B cell (primary cell): ENCODE measurements at regions of chr7 and their contacts with region 1.

Region 1: DNA sequence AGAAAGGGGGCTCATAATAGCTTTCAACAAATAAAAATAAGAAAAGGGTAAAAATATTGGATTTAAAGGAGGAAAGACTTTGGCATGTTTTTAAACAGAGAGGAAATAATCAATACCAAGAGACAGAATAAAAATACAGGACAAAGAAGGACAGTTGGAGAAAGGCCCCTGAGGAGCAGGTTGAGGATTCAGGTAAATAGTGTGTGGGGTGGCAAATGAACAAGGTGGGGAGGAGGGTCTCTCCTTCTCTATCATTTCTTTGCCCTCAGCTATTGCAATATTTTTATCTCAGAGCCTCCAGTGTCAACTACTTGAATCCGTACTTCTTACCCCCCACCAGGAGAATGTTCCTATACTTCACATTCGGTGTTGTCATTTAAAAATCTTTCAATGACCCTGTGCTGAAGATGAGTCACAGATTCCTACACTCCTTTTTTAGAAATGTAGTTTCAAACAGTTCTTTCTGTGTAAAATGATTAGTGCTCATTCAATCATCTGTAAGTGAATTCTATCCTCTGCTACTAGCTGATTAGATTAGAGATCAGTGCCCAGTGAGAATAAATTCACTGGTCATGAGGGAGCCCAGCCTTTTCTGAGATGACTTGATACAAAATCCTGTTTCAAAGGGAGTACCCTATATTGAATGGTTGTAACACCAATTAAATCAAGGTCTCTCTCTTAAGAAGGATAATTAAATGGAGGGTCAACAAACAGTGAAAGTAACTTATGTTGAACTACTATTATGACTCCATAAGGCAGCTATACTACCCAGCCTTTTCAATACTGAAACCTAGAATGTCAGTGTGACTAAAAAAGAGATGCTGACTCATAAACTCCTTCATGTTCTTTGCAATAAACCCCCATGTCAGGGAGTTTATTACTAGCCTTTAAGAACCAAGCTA is 50.4 kb upstream of the WNT16 start:
- DNase-seq: no peak
- ATAC-seq: peak; percentile 31
- H3K4me3 ChIP-seq: no peak overlapping the region
- H3K4me3 Mint-ChIP-seq: no peak overlapping the region
- H3K27ac ChIP-seq: no peak overlapping the region
- H3K27ac Mint-ChIP-seq: peak overlapping the region; percentile 57
- H3K4me1 ChIP-seq: peaks cover 5% of the 10 kb centered on the region in 2 donors
- H3K4me1 Mint-ChIP-seq: peaks cover 41% of the 10 kb centered on the region
- H3K27me3 ChIP-seq: no peaks in the 10 kb centered on the region
- H3K27me3 Mint-ChIP-seq: no peaks in the 10 kb centered on the region
- CTCF ChIP-seq: no peak

Region 2: GRCh38 chr7:120486164-120486563 is 792.2 kb before region 1 on chr7:
- CTCF ChIA-PET with region 1: no interaction called
- POLR2A ChIA-PET with region 1: no interaction called
- intact Hi-C with region 1: no loop called
- DNase-seq: no peak
- ATAC-seq: no peak
- H3K4me3 ChIP-seq: no peak overlapping the region
- H3K4me3 Mint-ChIP-seq: no peak overlapping the region
- H3K27ac ChIP-seq: no peak overlapping the region
- H3K27ac Mint-ChIP-seq: no peak overlapping the region
- H3K4me1 ChIP-seq: no peaks in the 10 kb centered on the region
- H3K4me1 Mint-ChIP-seq: no peaks in the 10 kb centered on the region
- H3K27me3 ChIP-seq: no peaks in the 10 kb centered on the region
- H3K27me3 Mint-ChIP-seq: no peaks in the 10 kb centered on the region
- CTCF ChIP-seq: no peak

Region 3: DNA sequence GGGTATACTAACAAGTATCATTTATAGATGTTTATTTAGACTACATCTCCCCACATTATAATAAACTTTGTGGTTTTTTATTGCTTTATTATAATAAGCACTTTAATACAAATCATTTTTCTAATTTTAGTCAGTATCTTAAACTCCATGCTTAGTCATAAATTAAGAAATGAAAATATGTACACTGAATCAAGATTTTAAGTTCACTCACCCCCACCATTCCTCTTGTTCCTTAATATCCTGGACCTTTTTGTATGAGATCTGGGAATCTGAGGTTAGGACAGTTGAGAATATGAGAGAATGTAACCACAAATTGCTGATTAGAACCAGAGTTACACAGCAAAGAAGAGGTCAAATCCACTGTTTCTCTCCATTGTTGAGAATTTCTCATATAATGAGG is 43.2 kb before region 1 on chr7:
- CTCF ChIA-PET with region 1: no interaction called
- POLR2A ChIA-PET with region 1: no interaction called
- intact Hi-C with region 1: loop called (anchors 5 kb)
- DNase-seq: no peak
- ATAC-seq: no peak
- H3K4me3 ChIP-seq: no peak overlapping the region
- H3K4me3 Mint-ChIP-seq: no peak overlapping the region
- H3K27ac ChIP-seq: no peak overlapping the region
- H3K27ac Mint-ChIP-seq: no peak overlapping the region
- H3K4me1 ChIP-seq: no peaks in the 10 kb centered on the region
- H3K4me1 Mint-ChIP-seq: peaks cover 6% of the 10 kb centered on the region
- H3K27me3 ChIP-seq: no peaks in the 10 kb centered on the region
- H3K27me3 Mint-ChIP-seq: no peaks in the 10 kb centered on the region
- CTCF ChIP-seq: no peak

Region 4: DNA sequence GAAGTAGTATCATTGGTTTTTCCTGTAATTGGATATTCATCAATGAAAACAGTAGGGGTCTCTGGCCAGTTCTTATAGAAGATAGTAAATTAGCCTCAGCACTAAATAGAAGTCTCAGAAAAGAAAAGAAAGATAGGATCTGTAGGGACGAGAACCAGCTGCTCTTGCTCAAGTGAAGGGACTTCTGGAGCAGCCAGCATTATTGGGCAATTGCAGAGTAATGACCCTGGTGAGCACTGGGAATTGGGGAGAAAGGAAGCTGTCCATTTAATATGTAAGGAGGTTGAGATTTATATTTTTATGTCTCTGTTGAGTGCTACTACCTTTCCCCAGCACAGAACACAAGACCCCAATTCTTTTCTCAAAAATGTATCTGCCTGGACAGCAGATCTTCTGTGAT is 10.8 kb before region 1 on chr7:
- CTCF ChIA-PET with region 1: no interaction called
- POLR2A ChIA-PET with region 1: no interaction called
- intact Hi-C with region 1: loop called (anchors 2 kb)
- DNase-seq: no peak
- ATAC-seq: no peak
- H3K4me3 ChIP-seq: no peak overlapping the region
- H3K4me3 Mint-ChIP-seq: no peak overlapping the region
- H3K27ac ChIP-seq: no peak overlapping the region
- H3K27ac Mint-ChIP-seq: no peak overlapping the region
- H3K4me1 ChIP-seq: no peaks in the 10 kb centered on the region
- H3K4me1 Mint-ChIP-seq: peaks cover 14% of the 10 kb centered on the region
- H3K27me3 ChIP-seq: no peaks in the 10 kb centered on the region
- H3K27me3 Mint-ChIP-seq: no peaks in the 10 kb centered on the region
- CTCF ChIP-seq: no peak

Region 5: GRCh38 chr7:121313793-121314676 is 35.7 kb after region 1 on chr7:
- CTCF ChIA-PET with region 1: no interaction called
- POLR2A ChIA-PET with region 1: no interaction called
- intact Hi-C with region 1: loop called (anchors 5 kb)
- DNase-seq: peak; percentile 54
- ATAC-seq: peak; percentile 88
- H3K4me3 ChIP-seq: peak overlapping the region in 3 of 5 experiments; percentile 17 to 28 (median 25)
- H3K4me3 Mint-ChIP-seq: peak overlapping the region; percentile 61
- H3K27ac ChIP-seq: peak overlapping the region; percentile 60 to 74
- H3K27ac Mint-ChIP-seq: peak overlapping the region; percentile 88
- H3K4me1 ChIP-seq: peaks cover 13 to 30% of the 10 kb centered on the region in 2 donors
- H3K4me1 Mint-ChIP-seq: peaks cover 44% of the 10 kb centered on the region
- H3K27me3 ChIP-seq: no peaks in the 10 kb centered on the region
- H3K27me3 Mint-ChIP-seq: no peaks in the 10 kb centered on the region
- CTCF ChIP-seq: no peak

Region 6: DNA sequence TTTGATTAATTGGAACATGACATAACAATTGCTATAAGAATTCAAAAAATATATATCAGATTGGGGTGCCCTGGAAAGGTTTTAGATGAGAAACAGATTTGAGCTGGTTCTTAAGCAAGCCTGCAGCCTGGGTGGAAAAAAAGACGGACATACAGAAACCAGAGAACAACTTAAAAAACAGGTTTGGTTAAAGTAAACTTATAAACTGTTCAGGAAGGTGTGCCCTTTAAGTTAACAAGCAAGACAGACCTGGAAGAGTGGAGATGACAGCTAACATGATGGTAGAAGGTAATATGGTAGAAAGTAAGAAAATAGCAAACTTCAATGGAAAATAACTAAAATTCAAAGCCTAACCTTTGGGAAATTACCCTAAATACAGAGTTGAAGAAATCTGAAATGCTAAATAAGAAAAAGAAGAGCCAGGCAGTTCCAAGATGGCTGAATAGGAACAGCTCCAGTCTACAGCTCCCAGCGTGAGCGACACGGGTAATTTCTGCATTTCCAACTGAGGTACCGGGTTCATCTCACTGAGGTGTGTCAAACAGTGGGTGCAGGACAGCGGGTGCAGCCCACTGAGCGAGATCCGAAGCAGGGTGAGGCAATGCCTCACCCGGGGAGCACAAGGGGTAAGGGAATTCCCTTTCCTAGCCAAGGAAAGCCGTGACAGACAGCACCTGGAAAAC is 1555.7 kb after region 1 on chr7:
- CTCF ChIA-PET with region 1: no interaction called
- POLR2A ChIA-PET with region 1: no interaction called
- intact Hi-C with region 1: no loop called
- DNase-seq: no peak
- ATAC-seq: no peak
- H3K4me3 ChIP-seq: no peak overlapping the region
- H3K4me3 Mint-ChIP-seq: no peak overlapping the region
- H3K27ac ChIP-seq: no peak overlapping the region
- H3K27ac Mint-ChIP-seq: no peak overlapping the region
- H3K4me1 ChIP-seq: no peaks in the 10 kb centered on the region
- H3K4me1 Mint-ChIP-seq: no peaks in the 10 kb centered on the region
- H3K27me3 ChIP-seq: no peaks in the 10 kb centered on the region
- H3K27me3 Mint-ChIP-seq: no peaks in the 10 kb centered on the region
- CTCF ChIP-seq: no peak